CD4-positive, alpha-beta memory T cell (primary cell): ENCODE measurements at regions of chr6 and their contacts with region 1.

Region 1: DNA sequence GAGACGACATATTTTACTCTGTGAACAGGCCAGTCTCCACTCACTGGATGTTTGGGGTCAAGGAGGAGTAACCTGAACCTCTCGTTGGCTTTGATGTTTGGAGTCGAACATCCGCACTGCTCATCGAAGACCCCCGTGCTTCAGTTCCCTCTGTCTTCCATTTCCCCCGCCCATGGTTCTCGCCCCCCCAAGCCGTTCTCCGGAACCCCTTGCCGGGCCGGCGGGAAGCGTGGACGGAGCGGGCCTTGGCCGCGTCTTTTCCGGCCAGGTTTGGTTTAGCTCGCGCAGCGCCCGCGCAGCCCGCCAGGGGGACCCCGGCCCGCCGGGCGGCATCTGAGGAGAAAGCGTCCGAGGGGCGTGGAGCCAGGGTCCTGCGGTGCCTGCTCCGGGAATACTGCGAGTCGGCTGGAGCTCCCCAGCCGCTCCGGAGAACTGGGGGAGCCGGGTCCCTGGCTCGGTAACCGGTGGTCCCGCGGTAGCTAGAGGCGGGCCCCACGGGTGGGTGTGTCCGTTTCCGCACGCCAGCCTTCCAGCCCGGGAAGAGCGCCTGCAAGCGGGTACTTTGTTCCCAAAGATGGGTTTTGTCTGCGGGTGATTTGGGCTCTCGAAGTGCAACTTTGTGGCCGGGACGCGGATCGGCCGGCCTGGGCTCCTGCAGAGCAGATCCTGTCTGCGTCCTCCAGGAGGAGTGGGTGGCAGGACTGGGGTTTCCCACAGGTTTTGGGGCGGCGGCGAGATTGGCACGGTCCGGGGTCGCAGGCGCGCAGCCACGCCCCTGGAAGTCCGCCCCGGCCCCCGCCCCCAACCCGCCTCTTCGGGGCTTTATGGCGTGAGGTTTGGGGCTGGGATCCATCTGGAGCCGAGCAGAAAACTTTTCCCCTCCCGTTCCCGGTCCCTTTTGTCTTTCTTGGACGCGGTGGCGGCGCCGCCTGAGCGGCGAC is at the start of gene TMEM200A:
- DNase-seq: peak; percentile 34 to 52 (median 36)
- H3K4me3 ChIP-seq: peak within 1 kb of the TSS in 1 of 2 donors; percentile 66
- H3K4me3 Mint-ChIP-seq: peak within 1 kb of the TSS; percentile 83 to 96 (median 87)
- H3K27ac ChIP-seq: peak within 1 kb of the TSS; percentile 55
- H3K27ac Mint-ChIP-seq: peak within 1 kb of the TSS in 6 of 7 donors; percentile 13 to 92 (median 64)
- H3K4me1 ChIP-seq: peaks cover 34% of the 10 kb centered on the region
- H3K4me1 Mint-ChIP-seq: peaks cover 20 to 37% (median 31%) of the 10 kb centered on the region in 4 donors
- H3K27me3 ChIP-seq: no peaks in the 10 kb centered on the region
- H3K27me3 Mint-ChIP-seq: no peaks in the 10 kb centered on the region
- total RNA-seq, gene TMEM200A: 1.1 to 1.2 TPM

Region 2: DNA sequence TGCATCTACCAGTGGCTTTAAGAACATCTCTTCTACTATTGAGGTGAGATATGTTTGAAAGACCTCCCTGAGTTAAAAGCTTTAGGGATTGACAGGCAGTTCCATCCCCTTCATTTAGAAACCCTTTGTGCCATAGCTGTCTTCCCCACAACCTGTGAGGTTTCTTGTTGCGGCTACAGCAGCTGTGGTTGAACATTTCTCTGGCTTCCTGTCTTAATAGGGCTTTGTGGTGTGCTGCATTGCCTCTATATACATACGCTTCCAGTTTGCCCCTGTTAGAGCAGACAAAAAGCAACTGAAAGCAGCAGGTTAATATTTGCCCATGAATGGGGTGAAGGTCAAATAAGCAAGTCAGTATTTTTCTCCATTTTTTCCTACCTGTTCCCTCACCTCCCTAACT is 210.5 kb after region 1 on chr6:
- CTCF ChIA-PET with region 1: interaction called, 5 read pairs
- POLR2A ChIA-PET with region 1: no interaction called
- intact Hi-C with region 1: loop called (anchors 5 kb)
- DNase-seq: peak; percentile 69 to 79 (median 71)
- H3K4me3 ChIP-seq: peak overlapping the region in 1 of 2 donors; percentile 36
- H3K4me3 Mint-ChIP-seq: peak overlapping the region; percentile 63 to 83 (median 78)
- H3K27ac ChIP-seq: no peak overlapping the region
- H3K27ac Mint-ChIP-seq: peak overlapping the region; percentile 56 to 88 (median 73)
- H3K4me1 ChIP-seq: peaks cover 58% of the 10 kb centered on the region
- H3K4me1 Mint-ChIP-seq: peaks cover 49 to 70% (median 59%) of the 10 kb centered on the region in 4 donors
- H3K27me3 ChIP-seq: no peaks in the 10 kb centered on the region
- H3K27me3 Mint-ChIP-seq: no peaks in the 10 kb centered on the region